Activated CD8-positive, alpha-beta T cell treated with anti-CD3 and anti-CD28 coated beads, Interleukin-2, amount 10 ng/mL, durations not matched to agents 7 days and 5 days (primary cell): ENCODE measurements at regions of chr9 and their contacts with region 1.

Region 1: GRCh38 chr9:37592108-37592951 is at the start of gene TOMM5:
- DNase-seq: peak; percentile 95
- ATAC-seq: peak; percentile 98
- H3K4me3 Mint-ChIP-seq: peak within 1 kb of the TSS; percentile 90
- H3K27ac Mint-ChIP-seq: peak within 1 kb of the TSS; percentile 96
- H3K4me1 Mint-ChIP-seq: peaks cover 31% of the 10 kb centered on the region
- H3K27me3 Mint-ChIP-seq: peaks cover 18% of the 10 kb centered on the region
- total RNA-seq, gene TOMM5: 110 to 112 TPM

Region 2: GRCh38 chr9:37575921-37576721 is 16.2 kb before region 1 on chr9 and contains the start of gene FBXO10:
- CTCF ChIA-PET with region 1: interaction called, 47 read pairs
- POLR2A ChIA-PET with region 1: interaction called, 22 read pairs
- DNase-seq: peak; percentile 49
- ATAC-seq: peak; percentile 76
- H3K4me3 Mint-ChIP-seq: peak within 1 kb of the TSS; percentile 69
- H3K27ac Mint-ChIP-seq: peak within 1 kb of the TSS; percentile 21
- H3K4me1 Mint-ChIP-seq: peaks cover 9% of the 10 kb centered on the region
- H3K27me3 Mint-ChIP-seq: peaks cover 6% of the 10 kb centered on the region
- total RNA-seq, gene FBXO10: 2.0 to 2.3 TPM

Region 3: GRCh38 chr9:37693260-37693659 is 100.9 kb after region 1 on chr9:
- CTCF ChIA-PET with region 1: no interaction called
- POLR2A ChIA-PET with region 1: no interaction called
- DNase-seq: no peak
- ATAC-seq: no peak
- H3K4me3 Mint-ChIP-seq: no peak overlapping the region
- H3K27ac Mint-ChIP-seq: no peak overlapping the region
- H3K4me1 Mint-ChIP-seq: no peaks in the 10 kb centered on the region
- H3K27me3 Mint-ChIP-seq: peaks cover 44% of the 10 kb centered on the region